ENCODE measurements at regions of chr10 and their contacts with region 1.

Region 1: DNA sequence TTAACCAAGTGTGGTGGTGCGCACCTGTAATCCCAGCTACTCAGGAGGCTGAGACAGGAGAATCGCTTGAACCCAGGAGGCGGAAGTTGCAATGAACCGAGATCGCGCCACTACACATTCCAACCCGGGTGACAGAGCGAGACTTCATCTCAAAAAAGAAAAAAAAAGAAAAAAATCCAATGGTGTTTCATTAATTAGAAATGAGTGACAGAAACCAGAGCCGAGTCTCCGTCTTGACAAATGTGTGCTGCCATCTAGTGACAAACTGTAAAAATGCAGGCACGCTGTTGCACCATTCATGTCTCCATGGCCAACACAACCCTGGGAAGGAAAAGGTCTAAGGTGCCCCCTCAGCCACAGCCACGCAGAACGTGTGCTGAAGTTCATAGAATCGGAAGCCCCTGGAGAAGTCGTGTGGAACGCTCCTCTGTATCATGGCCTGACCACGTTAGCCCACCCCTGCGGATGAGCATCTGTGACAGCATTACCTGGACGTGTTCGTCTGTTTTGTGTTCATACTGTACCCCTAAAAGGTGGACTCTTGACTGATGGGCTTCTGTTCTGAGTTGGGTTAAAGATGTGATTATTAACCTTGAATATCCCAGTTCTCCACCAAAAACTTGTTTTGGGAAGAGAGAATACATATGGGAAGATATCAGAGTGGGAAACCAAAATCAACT is 94.9 kb downstream of the LYZL2 start:
- DNase-seq: peak; percentile 50
- ATAC-seq: peak; percentile 84

Region 2: GRCh38 chr10:30392564-30392990 is 142.0 kb before region 1 on chr10:
- intact Hi-C with region 1: loop called (anchors 5 kb)
- DNase-seq: peak; percentile 81
- ATAC-seq: peak; percentile 98

Region 3: GRCh38 chr10:30413996-30414576 is 120.5 kb before region 1 on chr10:
- intact Hi-C with region 1: loop called (anchors 2 kb)
- DNase-seq: no peak
- ATAC-seq: peak; percentile 86

Region 4: DNA sequence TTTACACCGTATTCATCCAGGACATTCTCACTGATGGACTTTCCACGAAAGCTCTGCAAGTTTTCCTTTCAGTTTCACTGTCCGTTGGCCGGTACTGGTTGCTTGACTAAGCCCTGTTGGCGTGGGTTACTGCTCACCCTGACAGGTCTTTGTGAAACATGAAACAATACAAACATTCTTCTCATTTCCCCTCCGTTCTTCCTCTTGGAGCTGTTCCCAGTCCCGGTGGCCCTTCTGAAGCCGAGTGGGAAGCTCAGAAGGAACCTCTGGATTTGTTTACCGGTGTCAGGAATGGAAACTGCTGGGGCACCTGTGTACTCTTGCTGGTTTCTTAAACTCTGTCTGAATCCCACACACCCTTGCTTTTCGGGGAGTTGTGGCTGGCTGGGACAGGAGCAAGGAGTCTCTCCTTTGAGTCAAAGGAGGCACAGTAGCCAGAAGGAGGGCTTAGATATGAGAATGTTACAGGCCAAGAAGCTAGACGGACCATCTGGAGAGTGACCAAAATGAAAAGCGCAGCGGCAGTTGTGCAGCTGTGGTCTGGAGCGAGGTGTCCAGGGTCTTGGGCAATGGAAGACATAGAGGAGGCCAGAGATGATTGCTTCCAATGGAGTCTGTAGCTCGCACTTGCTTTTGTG is 49.3 kb after region 1 on chr10:
- intact Hi-C with region 1: loop called (anchors 5 kb)
- DNase-seq: peak; percentile 64
- ATAC-seq: peak; percentile 93